ENCODE measurements at regions of chr2 and their contacts with region 1.

Region 1: DNA sequence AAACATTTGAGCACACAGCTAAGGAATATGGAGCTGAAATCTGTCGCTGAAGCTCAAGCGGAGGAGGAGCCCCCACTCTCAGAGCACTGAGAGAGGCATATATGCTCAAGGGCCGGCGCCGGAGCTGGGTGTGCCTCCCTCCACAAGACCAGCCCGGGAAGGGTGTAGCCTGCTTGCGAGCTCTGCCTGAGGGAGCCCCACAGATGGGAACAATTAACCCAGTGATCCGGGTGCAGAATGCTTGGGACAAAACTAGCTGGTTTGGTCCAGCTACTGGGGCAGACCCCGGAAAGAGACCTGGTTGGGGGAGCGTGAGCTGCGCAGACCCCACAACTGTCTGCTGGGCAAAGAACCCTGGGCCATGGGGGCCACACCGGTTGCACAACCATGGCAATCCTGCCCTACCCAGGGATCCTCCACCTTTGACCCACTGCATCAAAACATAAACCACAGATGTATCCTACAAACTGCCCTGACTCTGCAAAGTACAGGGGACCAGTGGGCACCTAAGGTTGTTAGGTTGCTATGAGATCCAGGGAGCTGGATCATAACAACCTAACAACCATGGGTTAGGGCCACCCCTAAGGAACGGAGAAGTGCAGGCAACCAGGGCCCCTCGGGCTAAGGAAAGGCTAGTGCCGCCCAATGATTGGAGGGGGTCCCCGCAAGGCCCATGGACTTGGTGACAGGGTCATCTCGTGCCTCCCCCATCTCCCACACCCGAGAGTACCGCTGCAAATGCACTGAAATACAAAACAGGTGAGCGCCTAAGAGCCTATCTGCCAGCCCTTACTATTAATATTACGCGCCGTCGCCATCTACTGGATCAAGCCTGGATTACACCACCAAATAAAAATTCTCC is 53.4 kb upstream of the SCN1A start:
- DNase-seq: peak; percentile 71
- H3K4me3 Mint-ChIP-seq: no peak overlapping the region
- H3K27ac Mint-ChIP-seq: no peak overlapping the region
- H3K4me1 Mint-ChIP-seq: no peaks in the 10 kb centered on the region
- H3K27me3 Mint-ChIP-seq: no peaks in the 10 kb centered on the region
- CTCF ChIP-seq: peak; percentile 52

Region 2: GRCh38 chr2:165440367-165440766 is 740.8 kb before region 1 on chr2:
- CTCF ChIA-PET with region 1: no interaction called
- intact Hi-C with region 1: no loop called
- DNase-seq: no peak
- H3K4me3 Mint-ChIP-seq: no peak overlapping the region
- H3K27ac Mint-ChIP-seq: no peak overlapping the region
- H3K4me1 Mint-ChIP-seq: no peaks in the 10 kb centered on the region
- H3K27me3 Mint-ChIP-seq: no peaks in the 10 kb centered on the region
- CTCF ChIP-seq: no peak

Region 3: DNA sequence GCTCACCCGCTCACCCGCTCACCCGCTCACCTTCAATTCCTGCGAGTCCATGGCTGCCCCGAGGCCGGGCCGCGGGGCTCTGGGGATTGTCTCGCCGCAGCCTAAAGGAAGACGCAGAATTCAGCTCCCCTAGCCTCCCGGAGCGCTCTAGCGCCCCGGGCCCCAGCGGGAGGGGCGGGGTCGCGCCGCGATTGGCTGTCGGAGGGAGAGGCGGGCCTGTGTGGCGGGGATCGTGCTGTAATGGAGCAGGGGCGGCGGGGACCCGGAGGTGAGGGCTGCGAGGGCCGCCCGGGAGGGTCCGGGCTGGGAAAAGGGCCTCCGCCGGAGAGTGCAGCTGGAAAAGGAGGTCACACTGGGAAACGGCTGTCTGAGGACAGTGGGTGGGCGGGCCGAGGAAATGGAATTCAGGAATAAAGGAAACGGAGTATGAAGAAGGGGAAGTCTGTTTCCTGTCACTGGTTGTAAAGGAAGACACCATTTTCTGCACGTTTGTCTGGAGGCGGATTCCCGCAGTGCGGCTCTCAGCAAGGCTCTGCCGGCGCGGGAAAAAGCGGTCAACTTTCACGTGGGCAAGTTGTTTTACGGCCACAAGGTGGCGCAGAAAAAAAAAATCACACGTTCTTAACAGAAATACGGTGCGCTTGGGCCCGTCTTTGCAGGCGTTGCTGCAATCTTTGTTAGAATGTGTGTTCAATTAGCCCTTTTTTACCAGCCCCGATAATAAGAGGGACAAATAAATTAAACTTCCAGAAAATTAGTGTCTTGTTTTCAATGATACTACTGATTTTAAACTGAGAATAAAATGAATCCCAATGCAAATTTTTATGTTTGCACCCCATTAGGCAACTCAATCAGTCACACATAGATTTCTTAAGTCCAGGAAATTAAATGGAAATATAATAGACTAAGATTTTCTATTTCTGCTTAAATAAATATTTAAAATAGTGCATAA is 227.3 kb before region 1 on chr2 and contains the start of gene TTC21B:
- CTCF ChIA-PET with region 1: no interaction called
- intact Hi-C with region 1: loop called (anchors 2 kb)
- DNase-seq: peak; percentile 97
- H3K4me3 Mint-ChIP-seq: no peak within 1 kb of the TSS
- H3K27ac Mint-ChIP-seq: no peak within 1 kb of the TSS
- H3K4me1 Mint-ChIP-seq: no peaks in the 10 kb centered on the region
- H3K27me3 Mint-ChIP-seq: no peaks in the 10 kb centered on the region
- CTCF ChIP-seq: peak; percentile 80
- total RNA-seq, gene TTC21B: 12.0 and 14.7 TPM in 2 replicates

Region 4: GRCh38 chr2:166057370-166058164 is 123.6 kb before region 1 on chr2:
- CTCF ChIA-PET with region 1: interaction called, 4 read pairs
- intact Hi-C with region 1: loop called (anchors 1 kb)
- DNase-seq: no peak
- H3K4me3 Mint-ChIP-seq: no peak overlapping the region
- H3K27ac Mint-ChIP-seq: no peak overlapping the region
- H3K4me1 Mint-ChIP-seq: no peaks in the 10 kb centered on the region
- H3K27me3 Mint-ChIP-seq: no peaks in the 10 kb centered on the region
- CTCF ChIP-seq: peak; percentile 40

Region 5: DNA sequence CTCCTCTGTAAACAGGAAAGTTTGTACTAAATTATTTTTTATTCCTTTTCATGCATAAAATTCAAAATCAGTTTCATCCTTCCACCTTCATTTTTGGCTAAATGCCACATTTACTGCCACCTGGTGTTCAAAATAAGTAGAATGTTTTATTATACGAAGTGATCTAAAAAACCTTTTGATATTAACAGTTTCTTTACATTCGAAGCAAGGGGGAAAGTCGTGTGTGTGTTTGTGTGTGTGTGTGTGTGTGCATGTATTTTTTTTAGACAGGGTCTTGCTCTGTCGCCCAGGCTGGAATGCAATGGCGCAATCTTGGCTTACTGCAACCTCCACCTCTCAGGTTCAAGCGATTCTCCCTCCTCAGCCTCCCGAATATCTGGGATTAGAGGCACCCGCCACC is 203.6 kb after region 1 on chr2:
- CTCF ChIA-PET with region 1: no interaction called
- intact Hi-C with region 1: loop called (anchors 1 kb)
- DNase-seq: peak; percentile 32
- H3K4me3 Mint-ChIP-seq: no peak overlapping the region
- H3K27ac Mint-ChIP-seq: no peak overlapping the region
- H3K4me1 Mint-ChIP-seq: no peaks in the 10 kb centered on the region
- H3K27me3 Mint-ChIP-seq: no peaks in the 10 kb centered on the region
- CTCF ChIP-seq: peak; percentile 44

Region 6: DNA sequence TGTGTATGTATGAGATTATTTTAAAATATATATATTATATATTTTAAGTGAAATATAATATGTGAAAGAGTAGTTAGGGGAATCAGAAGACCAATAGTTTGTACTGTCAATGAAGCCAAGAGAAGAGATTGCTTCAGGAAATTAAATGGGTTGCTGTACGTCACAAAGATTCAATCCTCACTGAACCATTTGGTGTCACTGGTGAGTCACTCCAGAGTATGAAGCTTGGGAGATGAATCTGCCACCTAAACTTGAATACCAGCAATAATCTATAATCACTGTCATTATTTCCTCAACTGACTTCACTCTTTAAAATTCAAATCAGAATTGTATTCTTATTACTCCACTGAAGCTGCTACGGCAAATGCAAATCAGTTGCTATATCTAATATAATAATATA is 236.5 kb after region 1 on chr2:
- CTCF ChIA-PET with region 1: interaction called, 5 read pairs
- intact Hi-C with region 1: loop called (anchors 1 kb)
- DNase-seq: no peak
- H3K4me3 Mint-ChIP-seq: no peak overlapping the region
- H3K27ac Mint-ChIP-seq: no peak overlapping the region
- H3K4me1 Mint-ChIP-seq: no peaks in the 10 kb centered on the region
- H3K27me3 Mint-ChIP-seq: no peaks in the 10 kb centered on the region
- CTCF ChIP-seq: no peak

Region 7: DNA sequence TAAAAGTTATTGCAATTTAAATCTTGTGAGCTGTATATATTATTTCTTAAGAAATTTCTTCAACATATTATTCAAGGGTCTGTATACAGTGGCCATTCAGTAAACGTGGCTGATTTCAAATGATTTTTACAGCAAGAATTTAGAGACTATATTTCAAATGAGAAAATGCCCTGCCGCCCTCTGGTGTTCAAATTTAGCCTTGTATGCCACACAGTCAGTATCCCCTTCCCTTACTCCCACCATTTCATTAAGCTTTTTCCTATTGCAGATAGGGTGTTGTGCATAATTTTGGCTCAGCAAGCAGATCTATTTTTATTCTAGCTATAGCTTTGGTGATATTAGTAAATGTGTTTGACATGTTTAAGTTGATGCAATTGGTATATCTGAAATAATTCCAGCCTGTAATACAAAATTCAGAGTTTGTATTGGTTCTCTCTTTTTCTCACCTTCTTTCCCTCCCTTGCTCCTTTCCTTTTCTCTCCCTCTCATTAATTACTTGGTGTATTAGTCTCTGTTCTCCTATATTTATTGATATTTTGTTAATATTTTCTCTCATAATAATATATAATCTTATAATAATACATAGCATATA is 335.6 kb after region 1 on chr2:
- CTCF ChIA-PET with region 1: no interaction called
- intact Hi-C with region 1: loop called (anchors 1 kb)
- DNase-seq: peak; percentile 43
- H3K4me3 Mint-ChIP-seq: no peak overlapping the region
- H3K27ac Mint-ChIP-seq: no peak overlapping the region
- H3K4me1 Mint-ChIP-seq: no peaks in the 10 kb centered on the region
- H3K27me3 Mint-ChIP-seq: no peaks in the 10 kb centered on the region
- CTCF ChIP-seq: peak; percentile 25